Left lung (tissue), 14 donors: ENCODE measurements at regions of chr5 and their contacts with region 1.

Region 1: GRCh38 chr5:108339232-108339631 is 42.7 kb downstream of the FBXL17 start:
- DNase-seq: no peak
- ATAC-seq: no peak
- H3K4me3 ChIP-seq: no peak overlapping the region
- H3K27ac ChIP-seq: no peak overlapping the region
- H3K4me1 ChIP-seq: no peaks in the 10 kb centered on the region
- H3K27me3 ChIP-seq: no peaks in the 10 kb centered on the region
- CTCF ChIP-seq: no peak

Region 2: DNA sequence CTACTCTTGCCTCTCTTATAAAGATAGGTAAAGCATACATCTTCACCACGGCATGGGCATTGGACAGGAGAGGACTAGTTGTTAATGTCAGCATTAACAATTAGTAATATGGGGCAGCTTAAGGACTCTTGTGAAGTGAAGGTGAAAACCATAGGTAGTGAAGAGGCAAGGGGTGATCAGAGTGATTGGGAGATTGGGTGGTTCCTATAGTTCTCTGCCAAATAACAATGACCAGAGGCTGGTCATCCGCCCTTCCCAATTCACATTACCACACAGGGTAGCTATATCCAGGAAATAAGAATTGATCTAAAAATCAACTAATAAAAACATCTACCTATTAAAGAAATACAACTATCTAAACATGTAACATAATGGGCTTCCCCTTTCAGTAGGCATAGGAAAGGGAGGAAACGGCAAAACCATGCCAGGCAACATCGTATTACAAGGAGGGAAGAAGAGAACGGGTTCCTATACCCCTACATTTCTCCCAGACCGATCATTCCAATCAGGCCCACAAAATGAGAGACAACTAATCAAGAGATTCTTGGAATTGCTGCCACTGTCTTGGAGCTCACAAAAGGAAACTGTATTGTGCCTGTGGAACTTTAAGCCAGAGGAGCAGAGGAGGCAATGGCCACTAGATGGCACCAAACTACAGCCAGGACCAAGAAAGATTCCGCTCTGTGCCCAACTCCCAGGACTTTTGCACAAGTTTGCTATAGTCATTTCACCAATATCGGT is 78.9 kb before region 1 on chr5:
- intact Hi-C with region 1: loop called in 1 of 2 experiments (anchors 10 kb)
- DNase-seq: peak in 3 of 4 donors; percentile 72 to 85 (median 73)
- ATAC-seq: peak; percentile 97
- H3K4me3 ChIP-seq: peak overlapping the region in 1 of 2 donors; percentile 5
- H3K27ac ChIP-seq: no peak overlapping the region
- H3K4me1 ChIP-seq: peaks cover 0 to 17% of the 10 kb centered on the region in 2 donors
- H3K27me3 ChIP-seq: no peaks in the 10 kb centered on the region
- CTCF ChIP-seq: peak; percentile 90 to 91